Cardiac septum (tissue), 1 donor: ENCODE measurements at regions of chr15 and their contacts with region 1.

Region 1: GRCh38 chr15:91852741-91853510 is 582 bp upstream of the SLCO3A1 start:
- DNase-seq: peak; percentile 93

Region 2: GRCh38 chr15:91522663-91523332 is 330.1 kb before region 1 on chr15:
- intact Hi-C with region 1: loop called (anchors 10 kb)
- DNase-seq: no peak

Region 3: DNA sequence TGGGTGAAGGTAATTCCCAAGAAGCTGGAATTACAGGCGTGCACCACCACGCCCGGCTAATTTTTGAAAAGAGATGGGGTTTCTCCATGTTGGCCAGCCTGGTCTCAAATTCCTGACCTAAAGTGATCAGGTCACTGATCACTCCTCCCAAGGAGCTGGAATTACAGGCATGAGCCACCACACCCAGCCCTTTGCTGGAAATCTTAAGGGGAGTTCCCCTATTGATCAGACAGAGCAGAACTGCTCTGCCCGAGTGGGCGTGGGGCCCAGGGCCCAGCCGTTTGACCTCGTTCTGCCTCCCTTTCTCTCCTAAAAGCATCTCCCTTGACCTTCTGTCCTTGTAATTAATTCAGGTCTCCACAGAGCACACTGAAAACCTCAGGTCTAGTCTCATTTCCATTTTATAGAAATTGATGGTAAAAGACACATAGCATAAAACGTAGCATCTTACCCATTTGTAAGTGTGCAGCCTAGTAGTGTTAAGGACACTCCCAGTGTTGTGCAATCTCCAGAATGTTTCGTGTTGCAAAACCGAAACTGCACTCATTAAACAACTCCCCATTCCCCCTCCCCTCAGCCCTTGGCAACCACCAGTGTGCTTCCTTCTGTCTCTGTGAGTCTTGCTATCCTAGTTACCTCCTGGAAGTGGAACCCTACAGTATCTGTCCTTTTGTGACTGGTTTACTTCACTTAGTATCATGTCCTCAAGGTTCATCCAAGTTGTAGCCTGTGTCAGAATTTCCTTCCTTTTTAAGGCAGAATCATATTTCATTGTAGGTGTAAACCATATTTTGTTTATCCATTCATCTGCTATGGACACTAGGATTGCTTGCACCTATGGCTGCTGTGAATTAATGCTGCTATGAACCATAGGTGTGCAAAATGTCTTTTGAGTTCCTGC is 90.0 kb after region 1 on chr15:
- intact Hi-C with region 1: loop called (anchors 2 kb)
- DNase-seq: peak; percentile 87

Region 4: DNA sequence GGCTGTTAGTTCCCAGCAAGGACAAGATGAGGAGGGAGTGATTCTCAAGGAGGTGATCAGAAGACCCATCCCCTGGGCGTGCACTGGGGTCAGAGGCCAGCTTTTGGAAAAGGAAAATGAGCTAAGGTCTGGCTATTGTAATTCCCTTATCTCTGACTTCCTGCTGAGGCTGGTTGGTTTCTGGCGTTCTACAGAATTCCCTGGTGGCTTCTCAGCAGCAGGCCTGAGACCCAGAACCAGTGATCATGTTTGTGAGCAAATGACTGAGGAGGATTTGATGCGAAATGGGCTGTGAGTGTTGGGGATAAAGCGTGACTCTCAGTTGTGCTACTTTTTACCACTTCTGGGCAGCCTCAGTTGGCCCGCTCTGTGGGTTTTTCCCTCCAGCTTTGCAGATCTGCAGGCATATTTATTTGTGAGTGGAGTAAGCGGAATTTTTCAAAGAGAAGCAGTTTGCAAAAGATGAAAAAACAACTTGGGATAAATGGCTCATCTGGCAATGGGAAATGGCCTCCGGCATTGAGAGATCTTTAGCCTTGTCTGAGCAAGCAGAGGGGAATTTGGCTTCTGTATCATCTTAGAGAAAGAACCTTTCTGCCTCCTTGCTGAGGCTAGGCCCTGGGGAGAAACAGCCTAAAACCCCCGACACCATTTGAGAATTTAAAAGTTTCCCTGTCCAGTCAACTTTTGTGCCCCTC is 103.2 kb after region 1 on chr15:
- intact Hi-C with region 1: no loop called
- DNase-seq: no peak

Region 5: DNA sequence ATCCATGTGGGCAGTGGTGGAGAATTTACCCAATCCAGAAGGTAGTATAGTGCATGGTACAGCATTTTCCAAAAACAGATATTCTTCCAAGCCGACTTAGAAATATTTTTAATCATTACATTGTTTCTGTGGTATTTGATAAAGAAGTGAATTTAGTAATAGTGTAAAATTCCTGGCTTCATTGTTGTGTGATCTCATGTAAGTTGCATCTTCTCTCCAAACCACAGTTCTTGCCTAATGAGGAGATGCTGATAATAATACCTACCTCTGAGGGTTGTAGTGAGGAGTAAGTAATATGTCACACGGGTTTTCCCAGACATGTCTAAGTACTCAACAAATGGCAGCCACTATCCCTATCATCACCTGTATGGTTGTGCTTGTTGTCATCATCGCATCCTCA is 167.8 kb after region 1 on chr15:
- intact Hi-C with region 1: loop called (anchors 5 kb)
- DNase-seq: no peak

Region 6: GRCh38 chr15:92365067-92365466 is 512.1 kb after region 1 on chr15:
- intact Hi-C with region 1: no loop called
- DNase-seq: no peak